Ascending aorta (tissue), 2 donors: ENCODE measurements at regions of chr6 and their contacts with region 1.

Region 1: GRCh38 chr6:3732345-3733141 is 19.0 kb downstream of the PXDC1 start:
- DNase-seq: peak in 1 of 2 donors; percentile 80
- H3K4me3 ChIP-seq: peak overlapping the region; percentile 18 to 38
- H3K27ac ChIP-seq: peak overlapping the region; percentile 28 to 48
- H3K4me1 ChIP-seq: peaks cover 17 to 79% of the 10 kb centered on the region in 2 donors
- H3K27me3 ChIP-seq: no peaks in the 10 kb centered on the region
- CTCF ChIP-seq: peak; percentile 80 to 86 (median 82)

Region 2: DNA sequence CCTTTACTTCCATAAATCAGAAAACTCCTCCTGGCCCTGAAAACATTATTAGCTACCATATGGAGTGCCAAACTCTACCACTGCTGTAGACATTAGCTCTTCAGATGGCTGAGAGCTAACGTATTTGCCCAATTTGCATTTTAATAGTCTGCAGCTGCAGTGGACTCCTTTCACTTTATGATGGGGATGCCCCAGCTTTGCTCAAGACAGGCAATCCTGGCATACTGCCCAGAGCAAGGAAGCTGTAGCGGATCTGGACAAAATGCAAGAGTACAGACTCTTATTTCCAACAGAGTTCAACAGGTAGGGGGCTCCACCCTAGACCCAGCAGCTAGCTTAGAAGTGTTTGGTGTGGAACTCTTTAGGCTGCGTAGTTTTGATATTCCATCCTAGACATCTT is 1876.2 kb before region 1 on chr6:
- intact Hi-C with region 1: no loop called
- DNase-seq: no peak
- H3K4me3 ChIP-seq: no peak overlapping the region
- H3K27ac ChIP-seq: no peak overlapping the region
- H3K4me1 ChIP-seq: peaks cover 0 to 20% of the 10 kb centered on the region in 2 donors
- H3K27me3 ChIP-seq: no peaks in the 10 kb centered on the region
- CTCF ChIP-seq: no peak

Region 3: GRCh38 chr6:3118353-3119039 is 614.0 kb before region 1 on chr6 and contains the start of gene BPHL:
- intact Hi-C with region 1: loop called (anchors 10 kb)
- DNase-seq: peak; percentile 75 to 97
- H3K4me3 ChIP-seq: peak within 1 kb of the TSS; percentile 75 to 84
- H3K27ac ChIP-seq: peak within 1 kb of the TSS; percentile 81 to 93
- H3K4me1 ChIP-seq: peaks cover 0 to 5% of the 10 kb centered on the region in 2 donors
- H3K27me3 ChIP-seq: no peaks in the 10 kb centered on the region
- CTCF ChIP-seq: no peak
- total RNA-seq, gene BPHL: 7.7 TPM

Region 4: GRCh38 chr6:3410385-3411360 is 321.9 kb before region 1 on chr6:
- intact Hi-C with region 1: loop called (anchors 5 kb)
- DNase-seq: peak in 1 of 2 donors; percentile 71
- H3K4me3 ChIP-seq: no peak overlapping the region
- H3K27ac ChIP-seq: no peak overlapping the region
- H3K4me1 ChIP-seq: peaks cover 0 to 2% of the 10 kb centered on the region in 2 donors
- H3K27me3 ChIP-seq: no peaks in the 10 kb centered on the region
- CTCF ChIP-seq: peak; percentile 56 to 74 (median 59)

Region 5: DNA sequence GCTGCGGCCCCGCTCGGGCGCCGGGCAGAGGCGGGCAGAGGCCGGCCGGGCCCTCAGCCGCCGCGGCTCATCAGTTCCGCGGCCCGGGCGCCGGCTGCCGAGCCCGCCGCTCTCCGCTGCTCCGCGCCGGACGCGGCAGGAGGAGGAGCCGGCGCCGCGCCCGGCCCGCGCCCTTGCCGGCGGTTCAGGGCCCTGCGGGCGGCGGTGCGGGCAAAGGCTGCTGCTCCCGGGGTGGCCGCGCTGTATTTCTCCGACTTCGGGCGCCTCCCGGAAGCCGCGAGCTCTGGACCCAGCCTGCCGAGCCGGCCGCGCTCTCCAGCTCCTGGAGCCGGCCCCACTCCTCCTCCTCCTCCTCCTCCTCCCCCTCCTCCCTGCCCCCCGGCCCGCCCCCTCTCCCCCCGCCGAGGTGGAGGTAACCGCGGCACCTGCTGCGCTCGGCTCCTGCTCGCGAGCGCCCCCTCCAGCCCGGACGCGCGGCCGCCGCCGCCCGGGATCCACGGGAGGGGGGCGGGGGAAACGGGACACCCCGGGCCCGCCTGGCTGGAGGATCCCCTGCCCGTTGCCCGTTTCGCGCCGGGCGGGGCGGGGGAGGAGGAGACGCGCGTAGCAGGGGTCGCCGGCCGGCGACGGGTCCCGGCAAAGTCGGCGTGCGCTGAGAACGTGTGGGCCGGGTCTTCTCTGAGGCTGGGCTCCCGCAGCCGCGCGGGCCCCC is 275.6 kb before region 1 on chr6 and contains the start of gene SLC22A23:
- intact Hi-C with region 1: loop called (anchors 5 kb)
- DNase-seq: peak in 1 of 2 donors; percentile 72
- H3K4me3 ChIP-seq: peak within 1 kb of the TSS; percentile 74 to 79
- H3K27ac ChIP-seq: peak within 1 kb of the TSS in 1 of 2 donors; percentile 37
- H3K4me1 ChIP-seq: peaks cover 5 to 8% of the 10 kb centered on the region in 2 donors
- H3K27me3 ChIP-seq: no peaks in the 10 kb centered on the region
- CTCF ChIP-seq: peak; percentile 36 to 92 (median 59)
- total RNA-seq, gene SLC22A23: 42.0 TPM